Colonic mucosa (tissue), 4 donors: ENCODE measurements at regions of chr11 and their contacts with region 1.

Region 1: GRCh38 chr11:108664730-108665525 is at the start of gene DDX10:
- DNase-seq: peak; percentile 99
- H3K4me3 ChIP-seq: peak within 1 kb of the TSS; percentile 88
- H3K27ac ChIP-seq: no peak within 1 kb of the TSS
- H3K4me1 ChIP-seq: no peaks in the 10 kb centered on the region
- H3K27me3 ChIP-seq: no peaks in the 10 kb centered on the region
- CTCF ChIP-seq: no peak
- total RNA-seq, gene DDX10: 12.6 to 17.6 TPM

Region 2: DNA sequence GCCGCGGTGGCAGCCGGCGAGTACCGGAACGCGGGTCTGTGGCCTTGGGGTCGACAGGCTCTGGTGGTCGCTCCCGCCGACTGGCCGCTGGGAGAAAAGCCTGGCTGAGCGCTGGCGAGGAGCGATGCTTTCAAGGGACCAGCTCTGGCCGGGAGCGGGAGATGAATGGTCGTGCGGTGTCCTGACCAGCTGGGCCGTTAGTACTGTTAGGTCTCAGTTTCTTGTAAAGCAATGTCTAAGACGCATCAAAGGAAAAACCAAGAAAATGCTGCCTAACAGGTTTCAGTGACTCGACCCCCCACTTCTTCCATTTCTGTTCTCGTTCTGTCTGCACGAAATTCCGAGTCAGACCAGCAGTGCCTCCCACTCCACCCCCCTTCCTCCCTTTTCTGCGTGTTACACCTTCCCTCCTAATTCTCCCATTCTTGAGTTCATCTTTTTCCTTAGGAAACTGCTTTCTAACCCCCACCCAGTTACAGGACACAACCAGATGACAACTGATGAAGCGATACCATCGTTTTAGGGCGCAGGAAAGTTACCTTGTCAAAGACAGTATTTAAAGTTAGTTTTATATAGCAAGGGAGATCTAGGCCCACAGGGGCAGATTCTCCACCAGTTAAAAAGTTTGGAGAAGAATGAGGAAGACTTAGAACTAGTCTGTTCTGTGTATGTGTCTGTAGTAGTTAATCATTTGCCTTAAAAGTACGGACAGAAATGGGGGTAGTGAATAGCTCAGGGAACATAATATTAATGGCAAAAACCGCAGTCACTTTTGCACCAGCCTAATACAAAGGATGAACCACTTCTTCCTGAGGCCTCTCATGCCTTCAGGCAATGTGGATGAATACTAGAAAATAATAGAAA is 655.2 kb before region 1 on chr11:
- intact Hi-C with region 1: loop called (anchors 10 kb)
- DNase-seq: peak; percentile 30
- H3K4me3 ChIP-seq: peak overlapping the region; percentile 90
- H3K27ac ChIP-seq: peak overlapping the region; percentile 86
- H3K4me1 ChIP-seq: peaks cover 3% of the 10 kb centered on the region
- H3K27me3 ChIP-seq: no peaks in the 10 kb centered on the region
- CTCF ChIP-seq: no peak

Region 3: GRCh38 chr11:108394744-108395284 is 270.1 kb before region 1 on chr11:
- intact Hi-C with region 1: no loop called
- DNase-seq: no peak
- H3K4me3 ChIP-seq: no peak overlapping the region
- H3K27ac ChIP-seq: no peak overlapping the region
- H3K4me1 ChIP-seq: no peaks in the 10 kb centered on the region
- H3K27me3 ChIP-seq: no peaks in the 10 kb centered on the region
- CTCF ChIP-seq: no peak

Region 4: DNA sequence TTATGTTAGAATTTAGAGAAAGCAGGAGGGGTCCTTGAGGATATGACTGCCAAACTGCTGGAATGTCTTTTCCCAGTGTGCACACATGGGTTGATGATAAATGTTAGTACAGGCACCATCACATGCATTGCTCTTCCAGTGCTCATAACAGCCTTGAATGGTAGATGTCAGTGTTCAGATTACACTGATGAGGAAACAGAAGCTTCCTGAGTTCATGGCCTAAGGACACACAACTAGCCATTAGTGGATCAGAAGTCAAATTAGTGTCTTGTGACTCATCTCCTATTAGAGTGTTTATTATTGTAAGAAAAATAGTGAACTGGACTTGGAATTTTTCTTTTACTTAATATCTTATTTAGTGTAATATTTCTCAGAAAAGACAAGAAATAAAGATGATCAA is 241.4 kb after region 1 on chr11:
- intact Hi-C with region 1: no loop called
- DNase-seq: no peak
- H3K4me3 ChIP-seq: no peak overlapping the region
- H3K27ac ChIP-seq: no peak overlapping the region
- H3K4me1 ChIP-seq: no peaks in the 10 kb centered on the region
- H3K27me3 ChIP-seq: no peaks in the 10 kb centered on the region
- CTCF ChIP-seq: no peak

Region 5: DNA sequence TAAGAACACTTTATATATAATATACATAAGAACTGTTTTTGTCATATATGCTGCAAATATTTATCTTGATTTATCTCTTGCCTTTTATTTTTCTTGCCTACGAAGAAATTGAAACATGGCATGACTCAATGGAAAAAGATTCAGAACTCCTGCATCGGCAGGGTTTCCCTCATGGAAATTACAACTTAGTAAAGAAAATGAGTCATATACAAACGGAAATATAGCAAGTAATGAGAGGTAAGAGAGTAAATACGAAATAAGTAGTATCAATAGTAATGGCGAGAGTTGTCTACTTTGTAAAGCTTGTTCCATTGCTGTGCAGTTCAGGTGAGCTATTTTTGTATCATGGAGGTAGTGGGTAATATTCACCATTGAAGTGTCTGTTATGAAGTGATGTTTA is 350.4 kb after region 1 on chr11:
- intact Hi-C with region 1: no loop called
- DNase-seq: no peak
- H3K4me3 ChIP-seq: no peak overlapping the region
- H3K27ac ChIP-seq: no peak overlapping the region
- H3K4me1 ChIP-seq: no peaks in the 10 kb centered on the region
- H3K27me3 ChIP-seq: no peaks in the 10 kb centered on the region
- CTCF ChIP-seq: no peak

Region 6: DNA sequence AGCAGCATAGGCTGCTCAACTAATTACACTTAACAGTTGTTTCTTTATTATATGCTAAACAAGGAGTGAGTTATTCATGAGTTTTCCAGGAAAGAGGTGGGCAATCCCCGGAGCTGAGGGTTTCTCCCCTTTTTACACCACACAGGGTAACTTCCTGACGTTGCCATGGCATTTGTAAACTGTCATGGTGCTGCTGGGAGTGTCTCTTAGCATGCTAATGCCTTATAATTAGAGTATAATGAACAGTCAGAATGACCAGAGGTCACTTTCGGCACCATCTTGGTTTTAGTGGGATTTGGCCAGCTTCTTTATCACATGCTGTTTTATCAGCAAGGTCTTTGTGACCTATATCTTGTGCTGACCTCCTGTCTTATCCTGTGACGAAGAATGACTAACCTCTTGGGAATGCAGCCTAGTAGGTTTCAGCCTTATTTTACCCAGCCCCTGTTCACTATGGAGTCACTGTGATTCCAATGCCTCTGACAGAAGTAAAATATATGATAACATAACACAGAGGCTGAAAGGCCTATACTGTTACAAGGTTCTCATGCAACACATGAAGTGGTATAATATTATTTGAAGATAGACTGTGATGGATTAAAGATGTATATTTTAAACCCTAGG is 1672.8 kb after region 1 on chr11:
- intact Hi-C with region 1: no loop called
- DNase-seq: no peak
- H3K4me3 ChIP-seq: no peak overlapping the region
- H3K27ac ChIP-seq: no peak overlapping the region
- H3K4me1 ChIP-seq: no peaks in the 10 kb centered on the region
- H3K27me3 ChIP-seq: no peaks in the 10 kb centered on the region
- CTCF ChIP-seq: no peak